ENCODE measurements at regions of chr2 and their contacts with region 1.

Region 1: GRCh38 chr2:203656522-203657287 is 49.7 kb upstream of the CD28 start:
- DNase-seq: peak; percentile 90 to 94 (median 94)
- H3K4me3 ChIP-seq: no peak overlapping the region
- H3K4me3 Mint-ChIP-seq: no peak overlapping the region
- H3K27ac ChIP-seq: peak overlapping the region; percentile 75 to 78
- H3K27ac Mint-ChIP-seq: peak overlapping the region; percentile 88 to 96 (median 95)
- H3K4me1 ChIP-seq: peaks cover 54 to 59% of the 10 kb centered on the region in 2 donors
- H3K4me1 Mint-ChIP-seq: peaks cover 60% of the 10 kb centered on the region
- H3K27me3 ChIP-seq: no peaks in the 10 kb centered on the region
- H3K27me3 Mint-ChIP-seq: peaks cover 0 to 5% (median 4%) of the 10 kb centered on the region in 3 donors
- CTCF ChIP-seq: no peak

Region 2: DNA sequence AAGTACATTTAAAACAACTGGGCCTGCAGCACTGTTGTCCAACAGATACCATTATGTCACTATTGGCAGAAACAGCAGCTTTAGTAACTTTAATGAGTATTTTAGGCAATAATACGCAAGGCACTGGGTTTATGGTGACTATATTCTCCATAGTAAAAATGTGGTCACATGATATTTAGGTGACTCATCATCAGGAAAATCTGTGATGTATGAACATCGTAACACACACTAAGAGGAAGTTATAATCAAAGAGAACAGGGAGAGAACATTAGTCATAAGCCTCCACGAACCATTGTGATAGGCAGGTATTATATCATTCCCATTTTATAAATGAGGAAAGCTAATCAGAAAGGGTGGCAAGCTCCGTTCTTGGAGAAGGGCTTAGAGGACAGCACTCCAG is 158.5 kb before region 1 on chr2:
- intact Hi-C with region 1: loop called in 1 of 2 experiments (anchors 5 kb)
- DNase-seq: peak; percentile 78 to 93 (median 92)
- H3K4me3 ChIP-seq: no peak overlapping the region
- H3K4me3 Mint-ChIP-seq: no peak overlapping the region
- H3K27ac ChIP-seq: no peak overlapping the region
- H3K27ac Mint-ChIP-seq: peak overlapping the region in 6 of 7 donors; percentile 30 to 83 (median 74)
- H3K4me1 ChIP-seq: peaks cover 32 to 37% of the 10 kb centered on the region in 2 donors
- H3K4me1 Mint-ChIP-seq: peaks cover 36% of the 10 kb centered on the region
- H3K27me3 ChIP-seq: no peaks in the 10 kb centered on the region
- H3K27me3 Mint-ChIP-seq: peaks cover 0 to 2% (median 0%) of the 10 kb centered on the region in 3 donors
- CTCF ChIP-seq: no peak

Region 3: GRCh38 chr2:203689426-203690116 is 32.9 kb after region 1 on chr2:
- intact Hi-C with region 1: loop called in 1 of 2 experiments (anchors 5 kb)
- DNase-seq: no peak
- H3K4me3 ChIP-seq: no peak overlapping the region
- H3K4me3 Mint-ChIP-seq: peak overlapping the region in 1 of 2 donors; percentile 67
- H3K27ac ChIP-seq: peak overlapping the region in 1 of 2 donors; percentile 21
- H3K27ac Mint-ChIP-seq: peak overlapping the region in 1 of 7 donors; percentile 60
- H3K4me1 ChIP-seq: peaks cover 21% of the 10 kb centered on the region in 2 donors
- H3K4me1 Mint-ChIP-seq: peaks cover 31% of the 10 kb centered on the region
- H3K27me3 ChIP-seq: no peaks in the 10 kb centered on the region
- H3K27me3 Mint-ChIP-seq: no peaks in the 10 kb centered on the region
- CTCF ChIP-seq: no peak

Region 4: DNA sequence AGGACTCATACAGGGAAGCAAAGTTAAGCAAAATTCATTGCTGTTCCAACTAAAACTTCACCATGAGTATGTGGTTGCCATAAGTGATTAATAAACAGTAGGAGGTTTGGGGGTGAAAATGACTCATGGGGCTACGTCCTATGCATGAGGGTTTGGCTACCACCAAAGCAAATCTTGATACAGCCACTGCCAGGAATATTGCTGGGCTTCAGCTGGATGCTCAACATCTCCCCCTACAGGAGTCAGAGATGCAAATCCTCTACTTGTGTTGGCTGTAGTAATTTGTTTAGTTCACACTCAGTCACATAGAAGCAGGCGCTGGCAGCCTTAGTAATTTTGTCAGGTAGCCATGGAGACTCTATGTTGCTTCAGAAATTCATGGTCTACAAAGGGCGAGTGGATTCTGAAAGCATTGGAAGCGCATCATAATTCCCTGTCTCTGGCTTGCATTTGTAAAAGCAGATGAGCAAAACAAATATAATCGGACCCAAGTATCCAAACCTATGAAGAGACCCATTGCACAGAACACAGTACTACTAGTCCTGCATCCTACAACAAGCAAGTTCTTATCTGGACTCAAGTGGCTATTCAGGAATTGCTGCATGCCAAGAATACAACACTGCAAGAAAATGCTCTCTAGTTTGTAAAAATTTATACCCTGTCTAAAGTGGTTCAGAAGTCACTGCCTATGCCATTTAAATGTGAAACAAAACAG is 125.7 kb after region 1 on chr2:
- intact Hi-C with region 1: loop called in 1 of 2 experiments (anchors 5 kb)
- DNase-seq: peak; percentile 67 to 87 (median 80)
- H3K4me3 ChIP-seq: no peak overlapping the region
- H3K4me3 Mint-ChIP-seq: no peak overlapping the region
- H3K27ac ChIP-seq: no peak overlapping the region
- H3K27ac Mint-ChIP-seq: peak overlapping the region in 1 of 7 donors; percentile 85
- H3K4me1 ChIP-seq: peaks cover 16 to 17% of the 10 kb centered on the region in 2 donors
- H3K4me1 Mint-ChIP-seq: peaks cover 34% of the 10 kb centered on the region
- H3K27me3 ChIP-seq: no peaks in the 10 kb centered on the region
- H3K27me3 Mint-ChIP-seq: peaks cover 0 to 6% (median 3%) of the 10 kb centered on the region in 3 donors
- CTCF ChIP-seq: peak; percentile 84

Region 5: GRCh38 chr2:203814661-203815540 is 158.2 kb after region 1 on chr2:
- intact Hi-C with region 1: loop called (anchors 5 to 10 kb)
- DNase-seq: peak; percentile 79 to 90 (median 84)
- H3K4me3 ChIP-seq: peak overlapping the region in 1 of 3 experiments; percentile 26
- H3K4me3 Mint-ChIP-seq: peak overlapping the region; percentile 45 to 67
- H3K27ac ChIP-seq: no peak overlapping the region
- H3K27ac Mint-ChIP-seq: peak overlapping the region; percentile 18 to 74 (median 73)
- H3K4me1 ChIP-seq: peaks cover 57 to 69% of the 10 kb centered on the region in 2 donors
- H3K4me1 Mint-ChIP-seq: peaks cover 69% of the 10 kb centered on the region
- H3K27me3 ChIP-seq: no peaks in the 10 kb centered on the region
- H3K27me3 Mint-ChIP-seq: peaks cover 0 to 9% (median 4%) of the 10 kb centered on the region in 3 donors
- CTCF ChIP-seq: peak; percentile 83

Measured in CD14-positive monocyte (primary cell).